ENCODE measurements at regions of chr9 and their contacts with region 1.

Region 1: DNA sequence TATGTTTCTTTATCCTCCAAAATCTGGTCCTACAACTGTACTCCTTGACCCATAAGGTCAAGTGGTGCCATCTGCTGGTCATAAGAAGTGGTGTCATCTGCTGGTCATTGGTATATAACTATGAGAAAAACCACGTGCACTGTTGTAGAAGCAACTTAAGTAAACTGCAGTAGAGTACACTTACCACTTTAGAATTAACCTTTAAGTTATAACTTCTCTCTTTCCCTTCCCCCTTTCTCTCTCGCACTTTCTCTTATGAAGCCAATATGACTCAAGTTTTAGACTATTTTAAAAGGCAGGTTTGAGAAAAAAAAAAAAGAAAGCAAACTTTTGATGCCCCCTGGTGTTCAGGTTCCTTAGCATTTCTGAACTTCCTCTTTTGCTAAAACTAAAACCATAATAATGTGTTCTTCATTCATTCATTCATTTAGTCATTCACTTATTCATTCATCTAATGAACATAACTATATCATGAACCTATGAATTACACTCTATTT is 12.8 kb upstream of the MTAP start:
- DNase-seq: peak; percentile 88
- H3K4me3 ChIP-seq: peak overlapping the region; percentile 49
- H3K27ac ChIP-seq: no peak overlapping the region
- H3K27me3 ChIP-seq: no peaks in the 10 kb centered on the region
- CTCF ChIP-seq: peak; percentile 68

Region 2: GRCh38 chr9:21326526-21327139 is 463.0 kb before region 1 on chr9:
- CTCF ChIA-PET with region 1: interaction called, 19 read pairs
- POLR2A ChIA-PET with region 1: no interaction called
- DNase-seq: no peak
- H3K4me3 ChIP-seq: no peak overlapping the region
- H3K27ac ChIP-seq: no peak overlapping the region
- H3K27me3 ChIP-seq: no peaks in the 10 kb centered on the region
- CTCF ChIP-seq: peak; percentile 75

Region 3: GRCh38 chr9:21491742-21492141 is 297.8 kb before region 1 on chr9:
- CTCF ChIA-PET with region 1: interaction called, 16 read pairs
- POLR2A ChIA-PET with region 1: no interaction called
- DNase-seq: no peak
- H3K4me3 ChIP-seq: no peak overlapping the region
- H3K27ac ChIP-seq: no peak overlapping the region
- H3K27me3 ChIP-seq: no peaks in the 10 kb centered on the region
- CTCF ChIP-seq: peak; percentile 22; the same call in 1 of the 2 replicates

Region 4: GRCh38 chr9:21507485-21507795 is 282.1 kb before region 1 on chr9:
- CTCF ChIA-PET with region 1: interaction called, 13 read pairs
- POLR2A ChIA-PET with region 1: interaction called, 4 read pairs
- DNase-seq: no peak
- H3K4me3 ChIP-seq: no peak overlapping the region
- H3K27ac ChIP-seq: no peak overlapping the region
- H3K27me3 ChIP-seq: no peaks in the 10 kb centered on the region
- CTCF ChIP-seq: no peak

Region 5: GRCh38 chr9:21559424-21560280 is 229.9 kb before region 1 on chr9:
- CTCF ChIA-PET with region 1: interaction called, 15 read pairs
- POLR2A ChIA-PET with region 1: no interaction called
- DNase-seq: no peak
- H3K4me3 ChIP-seq: peak overlapping the region; percentile 75
- H3K27ac ChIP-seq: peak overlapping the region; percentile 75
- H3K27me3 ChIP-seq: no peaks in the 10 kb centered on the region
- CTCF ChIP-seq: no peak

Region 6: GRCh38 chr9:21709464-21710058 is 80.0 kb before region 1 on chr9:
- CTCF ChIA-PET with region 1: interaction called, 22 read pairs
- POLR2A ChIA-PET with region 1: no interaction called
- DNase-seq: no peak
- H3K4me3 ChIP-seq: no peak overlapping the region
- H3K27ac ChIP-seq: no peak overlapping the region
- H3K27me3 ChIP-seq: no peaks in the 10 kb centered on the region
- CTCF ChIP-seq: peak; percentile 75